Endothelial cell of umbilical vein (primary cell): ENCODE measurements at regions of chr2 and their contacts with region 1.

Region 1: DNA sequence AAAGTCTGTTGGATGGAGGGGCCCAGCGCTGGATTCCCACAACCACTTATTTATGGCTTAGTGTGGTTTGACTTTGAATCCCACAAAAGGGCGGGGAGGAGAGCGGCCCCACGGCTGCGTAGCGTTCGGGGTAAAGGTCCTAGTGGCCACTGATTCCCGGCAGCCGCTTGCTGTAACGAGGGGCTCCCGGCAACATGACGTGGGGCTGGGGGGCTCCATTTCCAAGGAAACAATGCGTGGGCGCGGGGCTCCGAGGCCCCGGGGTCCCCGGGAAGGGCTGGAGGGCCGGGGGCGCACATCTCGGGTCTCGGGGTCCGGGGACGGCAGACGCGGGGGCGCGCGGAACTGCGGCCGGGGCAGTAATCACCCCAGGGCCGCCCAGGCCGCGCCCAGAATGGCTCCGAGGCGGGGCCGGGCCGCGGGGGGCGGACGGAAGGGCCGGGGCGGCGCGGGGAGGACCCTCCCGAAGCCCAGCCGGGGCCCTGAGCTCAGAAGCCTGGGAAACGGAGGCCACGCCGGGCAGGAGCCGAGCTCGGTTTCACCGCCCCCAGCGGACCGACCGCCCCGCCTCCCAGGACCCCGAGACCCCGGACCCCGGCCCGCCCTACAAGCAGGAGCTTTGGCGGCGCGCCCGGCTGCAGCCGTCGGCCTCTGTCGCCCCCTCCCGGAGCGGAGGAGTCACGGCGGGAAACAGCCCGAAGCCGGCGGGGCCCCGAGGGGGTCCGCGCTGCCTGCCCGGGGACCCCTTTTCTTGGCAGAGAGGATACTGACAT is 11.9 kb upstream of the MLPH start:
- DNase-seq: peak; percentile 54
- H3K4me3 ChIP-seq: peak overlapping the region; percentile 38 to 51 (median 40)
- H3K27ac ChIP-seq: peak overlapping the region; percentile 23
- H3K4me1 ChIP-seq: peaks cover 12% of the 10 kb centered on the region
- H3K27me3 ChIP-seq: peaks cover 36 to 42% of the 10 kb centered on the region in 2 experiments
- CTCF ChIP-seq: peak; percentile 73 to 93
- POLR2A ChIP-seq: peak; percentile 23

Region 2: GRCh38 chr2:237500681-237501424 is 25.7 kb after region 1 on chr2:
- CTCF ChIA-PET with region 1: interaction called, 21 read pairs
- POLR2A ChIA-PET with region 1: no interaction called
- dilution Hi-C with region 1: no loop called
- intact Hi-C with region 1: no loop called
- DNase-seq: peak; percentile 57
- H3K4me3 ChIP-seq: no peak overlapping the region
- H3K27ac ChIP-seq: no peak overlapping the region
- H3K4me1 ChIP-seq: peaks cover 20% of the 10 kb centered on the region
- H3K27me3 ChIP-seq: peaks cover 3 to 4% of the 10 kb centered on the region in 2 experiments
- CTCF ChIP-seq: no peak
- POLR2A ChIP-seq: no peak

Region 3: DNA sequence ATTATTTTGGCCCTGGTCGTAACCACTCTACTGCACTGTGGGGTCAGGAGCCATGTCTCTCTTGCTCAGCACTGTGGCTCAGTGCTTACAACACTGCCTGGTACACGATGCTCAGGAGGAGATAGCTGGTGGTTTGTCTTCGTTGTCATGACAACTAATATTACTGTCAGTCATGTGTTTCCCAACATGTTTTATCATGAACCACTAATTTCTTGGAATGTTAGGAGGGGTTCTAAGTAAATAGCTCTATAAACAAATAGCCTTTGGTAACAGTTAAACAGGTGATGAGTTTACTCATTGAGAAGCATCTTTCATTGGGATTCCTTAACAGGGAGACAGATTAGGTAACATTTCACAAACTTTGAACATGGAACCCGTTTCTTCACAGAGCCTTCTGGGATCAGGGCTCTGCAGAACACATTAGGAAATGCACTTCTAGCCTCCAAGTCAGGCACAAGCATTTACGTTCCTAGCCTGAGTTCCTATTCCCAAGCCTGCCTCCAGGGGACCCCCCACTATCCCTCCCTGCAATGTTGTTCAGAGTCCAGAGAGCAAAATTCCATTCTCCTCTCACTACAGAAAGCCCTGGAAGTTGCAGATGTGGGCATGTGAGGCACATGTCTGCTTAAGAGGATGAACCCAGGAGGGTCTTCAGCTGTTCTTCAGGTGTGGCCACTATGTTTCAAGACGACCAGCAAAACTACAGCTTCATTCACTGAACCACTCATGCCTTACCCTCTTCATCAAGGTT is 317.0 kb after region 1 on chr2:
- CTCF ChIA-PET with region 1: no interaction called
- POLR2A ChIA-PET with region 1: no interaction called
- dilution Hi-C with region 1: no loop called
- intact Hi-C with region 1: no loop called
- DNase-seq: no peak
- H3K4me3 ChIP-seq: no peak overlapping the region
- H3K27ac ChIP-seq: no peak overlapping the region
- H3K4me1 ChIP-seq: no peaks in the 10 kb centered on the region
- H3K27me3 ChIP-seq: no peaks in the 10 kb centered on the region
- CTCF ChIP-seq: peak in 1 of 2 donors; percentile 28
- POLR2A ChIP-seq: no peak